ENCODE measurements at regions of chr3 and their contacts with region 1.

Region 1: GRCh38 chr3:48372377-48372770 is 355 bp downstream of the FBXW12 start:
- DNase-seq: no peak
- H3K4me3 ChIP-seq: no peak overlapping the region
- H3K4me3 Mint-ChIP-seq: no peak overlapping the region
- H3K27ac Mint-ChIP-seq: peak overlapping the region; percentile 79
- H3K4me1 ChIP-seq: peaks cover 19% of the 10 kb centered on the region
- H3K4me1 Mint-ChIP-seq: peaks cover 42% of the 10 kb centered on the region
- H3K27me3 ChIP-seq: no peaks in the 10 kb centered on the region
- H3K27me3 Mint-ChIP-seq: no peaks in the 10 kb centered on the region
- CTCF ChIP-seq: no peak

Region 2: GRCh38 chr3:48112813-48113212 is 259.6 kb before region 1 on chr3:
- CTCF ChIA-PET with region 1: no interaction called
- POLR2A ChIA-PET with region 1: no interaction called
- intact Hi-C with region 1: no loop called
- DNase-seq: no peak
- H3K4me3 ChIP-seq: no peak overlapping the region
- H3K4me3 Mint-ChIP-seq: no peak overlapping the region
- H3K27ac Mint-ChIP-seq: no peak overlapping the region
- H3K4me1 ChIP-seq: no peaks in the 10 kb centered on the region
- H3K4me1 Mint-ChIP-seq: no peaks in the 10 kb centered on the region
- H3K27me3 ChIP-seq: no peaks in the 10 kb centered on the region
- H3K27me3 Mint-ChIP-seq: no peaks in the 10 kb centered on the region
- CTCF ChIP-seq: no peak

Region 3: GRCh38 chr3:48347500-48347899 is 24.9 kb before region 1 on chr3:
- CTCF ChIA-PET with region 1: interaction called, 5 read pairs
- POLR2A ChIA-PET with region 1: no interaction called
- intact Hi-C with region 1: loop called (anchors 2 kb)
- DNase-seq: peak; percentile 18 to 69
- H3K4me3 ChIP-seq: no peak overlapping the region
- H3K4me3 Mint-ChIP-seq: no peak overlapping the region
- H3K27ac Mint-ChIP-seq: peak overlapping the region; percentile 39
- H3K4me1 ChIP-seq: peaks cover 49% of the 10 kb centered on the region
- H3K4me1 Mint-ChIP-seq: peaks cover 38% of the 10 kb centered on the region
- H3K27me3 ChIP-seq: no peaks in the 10 kb centered on the region
- H3K27me3 Mint-ChIP-seq: no peaks in the 10 kb centered on the region
- CTCF ChIP-seq: no peak